ENCODE measurements at regions of chr12 and their contacts with region 1.

Region 1: DNA sequence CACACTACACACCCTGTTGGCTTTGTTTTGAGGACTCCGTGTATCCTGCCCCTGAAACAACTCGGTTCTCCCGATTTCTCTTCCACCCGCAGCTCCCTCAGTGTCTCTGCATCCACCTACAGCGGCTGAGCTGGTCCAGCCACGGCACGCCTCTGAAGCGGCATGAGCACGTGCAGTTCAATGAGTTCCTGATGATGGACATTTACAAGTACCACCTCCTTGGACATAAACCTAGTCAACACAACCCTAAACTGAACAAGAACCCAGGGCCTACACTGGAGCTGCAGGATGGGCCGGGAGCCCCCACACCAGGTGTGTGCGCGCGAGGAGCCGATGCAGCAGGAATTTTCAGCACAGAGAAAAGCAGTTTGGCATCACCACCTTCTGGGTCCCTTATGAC is 10.5 kb downstream of the ALKBH2 start:
- DNase-seq: no peak
- H3K4me3 ChIP-seq: no peak overlapping the region
- H3K27ac ChIP-seq: no peak overlapping the region
- H3K4me1 ChIP-seq: no peaks in the 10 kb centered on the region
- H3K27me3 ChIP-seq: no peaks in the 10 kb centered on the region
- CTCF ChIP-seq: no peak

Region 2: GRCh38 chr12:109027767-109028166 is 55.0 kb before region 1 on chr12:
- CTCF ChIA-PET with region 1: no interaction called
- POLR2A ChIA-PET with region 1: no interaction called
- intact Hi-C with region 1: no loop called
- DNase-seq: no peak
- H3K4me3 ChIP-seq: no peak overlapping the region
- H3K27ac ChIP-seq: no peak overlapping the region
- H3K4me1 ChIP-seq: no peaks in the 10 kb centered on the region
- H3K27me3 ChIP-seq: peaks cover 42% of the 10 kb centered on the region; the same call in 1 of the 2 replicates
- CTCF ChIP-seq: no peak

Region 3: GRCh38 chr12:109192358-109192757 is 109.6 kb after region 1 on chr12:
- CTCF ChIA-PET with region 1: no interaction called
- POLR2A ChIA-PET with region 1: interaction called, 11 read pairs
- intact Hi-C with region 1: no loop called
- DNase-seq: peak; percentile 26 to 82
- H3K4me3 ChIP-seq: no peak overlapping the region
- H3K27ac ChIP-seq: no peak overlapping the region
- H3K4me1 ChIP-seq: peaks cover 12% of the 10 kb centered on the region
- H3K27me3 ChIP-seq: no peaks in the 10 kb centered on the region
- CTCF ChIP-seq: no peak

Region 4: GRCh38 chr12:109232731-109233130 is 150.0 kb after region 1 on chr12:
- CTCF ChIA-PET with region 1: no interaction called
- POLR2A ChIA-PET with region 1: no interaction called
- intact Hi-C with region 1: no loop called
- DNase-seq: no peak
- H3K4me3 ChIP-seq: no peak overlapping the region
- H3K27ac ChIP-seq: no peak overlapping the region
- H3K4me1 ChIP-seq: no peaks in the 10 kb centered on the region
- H3K27me3 ChIP-seq: peaks cover 27% of the 10 kb centered on the region
- CTCF ChIP-seq: no peak

Region 5: GRCh38 chr12:109264095-109264942 is 181.6 kb after region 1 on chr12:
- CTCF ChIA-PET with region 1: no interaction called
- POLR2A ChIA-PET with region 1: no interaction called
- intact Hi-C with region 1: no loop called
- DNase-seq: peak; percentile 61 to 78
- H3K4me3 ChIP-seq: no peak overlapping the region
- H3K27ac ChIP-seq: no peak overlapping the region
- H3K4me1 ChIP-seq: no peaks in the 10 kb centered on the region
- H3K27me3 ChIP-seq: no peaks in the 10 kb centered on the region
- CTCF ChIP-seq: peak; percentile 93

Measured in PC-9 (cell line).